ENCODE measurements at regions of chr13 and their contacts with region 1.

Region 1: GRCh38 chr13:51632591-51633362 is 48.5 kb downstream of the WDFY2 start:
- DNase-seq: peak; percentile 68 to 96 (median 77)

Region 2: DNA sequence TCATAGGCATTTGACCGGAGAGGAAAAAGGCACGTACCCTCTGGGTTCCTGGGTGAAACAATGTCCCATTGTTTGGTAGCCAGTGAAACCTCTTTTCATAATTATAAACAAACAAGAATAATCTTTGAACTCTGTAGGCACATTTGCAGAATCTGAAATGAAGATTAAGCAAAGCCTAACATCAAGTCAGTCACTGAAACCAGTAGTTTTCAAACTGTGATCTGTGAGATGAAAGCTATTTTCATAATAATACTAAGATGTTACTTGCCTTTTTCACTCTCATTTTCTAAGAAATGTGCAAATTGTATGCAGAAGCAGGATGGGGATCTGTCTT is 56.9 kb after region 1 on chr13:
- intact Hi-C with region 1: loop called (anchors 5 kb)
- DNase-seq: peak in 2 of 10 donors; percentile 19 to 73

Region 3: GRCh38 chr13:51721496-51721895 is 88.7 kb after region 1 on chr13:
- intact Hi-C with region 1: loop called (anchors 5 kb)
- DNase-seq: no peak